IMR-90 (cell line): ENCODE measurements at regions of chr5 and their contacts with region 1.

Region 1: DNA sequence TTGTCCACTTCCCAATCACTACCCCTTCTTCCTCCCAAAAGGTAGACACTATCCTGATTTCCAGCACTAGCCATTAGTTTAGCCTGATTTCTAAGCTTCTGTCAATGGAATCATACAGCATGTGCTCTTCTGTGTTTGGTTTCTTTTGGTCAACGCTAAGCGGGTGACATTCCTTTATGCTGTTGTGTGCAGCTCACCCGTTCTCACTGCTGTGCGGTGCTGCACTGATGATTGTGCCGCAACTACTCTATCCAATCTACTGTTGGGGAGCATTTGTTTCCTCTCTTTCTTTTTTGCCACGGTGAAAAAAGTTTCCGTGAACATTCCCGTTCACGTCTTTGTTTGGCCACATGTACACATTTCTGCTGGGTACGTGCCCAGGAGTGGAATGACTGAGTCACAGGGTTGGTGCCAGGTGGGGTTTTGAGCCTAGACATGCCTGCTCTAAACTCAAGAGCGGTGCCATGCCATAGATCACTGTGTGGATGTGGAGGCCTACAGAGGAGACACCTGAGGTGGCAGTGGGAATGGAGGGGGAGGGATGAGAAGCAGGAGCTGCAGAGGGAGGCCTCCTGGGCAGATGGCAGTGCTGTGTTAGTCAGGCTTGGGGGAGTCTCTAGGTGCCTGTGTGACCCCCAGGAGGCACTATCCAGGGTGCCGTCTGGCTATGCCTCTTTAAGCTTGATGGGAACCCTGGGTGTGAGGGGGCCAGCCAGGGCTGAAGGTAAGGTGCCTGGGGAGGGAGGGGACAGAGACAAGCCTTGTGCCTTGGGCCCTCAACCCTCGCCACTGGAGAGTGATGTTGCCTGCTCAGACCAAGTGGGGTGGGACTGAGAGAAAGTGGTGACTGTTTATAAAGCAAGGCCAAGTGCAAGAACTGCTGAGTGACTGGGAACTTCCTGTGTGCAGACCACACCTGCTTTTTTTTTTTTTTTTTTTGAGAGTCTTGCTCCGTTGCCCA is 11.4 kb upstream of the ANKRD33B start:
- DNase-seq: peak; percentile 37
- ATAC-seq: no peak
- H3K4me3 ChIP-seq: no peak overlapping the region
- H3K27ac ChIP-seq: peak overlapping the region; percentile 71
- H3K4me1 ChIP-seq: peaks cover 39% of the 10 kb centered on the region
- H3K27me3 ChIP-seq: no peaks in the 10 kb centered on the region
- CTCF ChIP-seq: no peak
- POLR2A ChIP-seq: no peak
- RAD21 ChIP-seq: no peak

Region 2: DNA sequence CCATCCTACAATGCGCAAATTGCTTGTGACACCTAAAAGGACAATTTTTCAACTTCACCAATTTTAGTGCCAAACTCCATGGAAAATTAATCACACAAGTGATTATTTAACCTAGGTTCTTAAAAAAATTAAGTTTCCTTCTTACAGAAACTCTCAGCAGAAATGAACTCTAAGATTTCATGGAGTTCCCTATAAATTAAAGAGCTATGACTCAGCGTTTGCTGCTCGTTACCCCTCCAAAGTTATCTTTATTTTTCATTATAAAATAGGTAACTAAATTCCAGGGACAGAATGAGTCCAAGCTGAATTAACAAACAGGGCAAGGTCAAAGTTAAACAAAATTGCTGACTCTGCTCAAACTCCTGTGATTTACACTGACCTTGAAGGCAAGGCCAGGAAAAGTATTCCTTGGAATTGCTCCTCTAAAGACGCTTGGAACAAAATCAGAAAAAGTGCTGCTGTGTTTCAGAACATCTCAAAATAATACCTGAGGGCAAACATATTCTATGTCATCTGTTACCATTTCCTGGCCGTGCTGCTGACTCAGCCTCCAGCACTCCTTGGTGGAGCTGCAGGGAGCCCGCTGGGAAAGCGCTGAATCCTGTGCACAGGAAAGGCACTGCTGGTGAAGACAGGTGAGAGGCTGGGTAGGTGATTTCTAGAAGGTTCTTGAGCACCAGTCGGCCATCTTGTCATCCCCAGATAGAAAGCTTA is 242.2 kb before region 1 on chr5:
- CTCF ChIA-PET with region 1: no interaction called
- POLR2A ChIA-PET with region 1: no interaction called
- dilution Hi-C with region 1: no loop called
- in situ Hi-C with region 1: no loop called
- intact Hi-C with region 1: no loop called
- DNase-seq: peak; percentile 59
- ATAC-seq: no peak
- H3K4me3 ChIP-seq: no peak overlapping the region
- H3K27ac ChIP-seq: 0 out of 2 replicates have a peak overlapping the region, but pooled peaks have one; percentile 9
- H3K4me1 ChIP-seq: peaks cover 8% of the 10 kb centered on the region
- H3K27me3 ChIP-seq: no peaks in the 10 kb centered on the region; the same call in 1 of the 2 replicates
- CTCF ChIP-seq: no peak
- POLR2A ChIP-seq: no peak
- RAD21 ChIP-seq: no peak

Region 3: GRCh38 chr5:10485142-10485795 is 67.2 kb before region 1 on chr5:
- CTCF ChIA-PET with region 1: no interaction called
- POLR2A ChIA-PET with region 1: no interaction called
- dilution Hi-C with region 1: no loop called
- in situ Hi-C with region 1: no loop called
- intact Hi-C with region 1: loop called (anchors 1 kb)
- DNase-seq: peak; percentile 96
- ATAC-seq: peak; percentile 89
- H3K4me3 ChIP-seq: no peak overlapping the region
- H3K27ac ChIP-seq: peak overlapping the region; percentile 80
- H3K4me1 ChIP-seq: peaks cover 19% of the 10 kb centered on the region
- H3K27me3 ChIP-seq: no peaks in the 10 kb centered on the region
- CTCF ChIP-seq: no peak
- POLR2A ChIP-seq: no peak
- RAD21 ChIP-seq: no peak

Region 4: DNA sequence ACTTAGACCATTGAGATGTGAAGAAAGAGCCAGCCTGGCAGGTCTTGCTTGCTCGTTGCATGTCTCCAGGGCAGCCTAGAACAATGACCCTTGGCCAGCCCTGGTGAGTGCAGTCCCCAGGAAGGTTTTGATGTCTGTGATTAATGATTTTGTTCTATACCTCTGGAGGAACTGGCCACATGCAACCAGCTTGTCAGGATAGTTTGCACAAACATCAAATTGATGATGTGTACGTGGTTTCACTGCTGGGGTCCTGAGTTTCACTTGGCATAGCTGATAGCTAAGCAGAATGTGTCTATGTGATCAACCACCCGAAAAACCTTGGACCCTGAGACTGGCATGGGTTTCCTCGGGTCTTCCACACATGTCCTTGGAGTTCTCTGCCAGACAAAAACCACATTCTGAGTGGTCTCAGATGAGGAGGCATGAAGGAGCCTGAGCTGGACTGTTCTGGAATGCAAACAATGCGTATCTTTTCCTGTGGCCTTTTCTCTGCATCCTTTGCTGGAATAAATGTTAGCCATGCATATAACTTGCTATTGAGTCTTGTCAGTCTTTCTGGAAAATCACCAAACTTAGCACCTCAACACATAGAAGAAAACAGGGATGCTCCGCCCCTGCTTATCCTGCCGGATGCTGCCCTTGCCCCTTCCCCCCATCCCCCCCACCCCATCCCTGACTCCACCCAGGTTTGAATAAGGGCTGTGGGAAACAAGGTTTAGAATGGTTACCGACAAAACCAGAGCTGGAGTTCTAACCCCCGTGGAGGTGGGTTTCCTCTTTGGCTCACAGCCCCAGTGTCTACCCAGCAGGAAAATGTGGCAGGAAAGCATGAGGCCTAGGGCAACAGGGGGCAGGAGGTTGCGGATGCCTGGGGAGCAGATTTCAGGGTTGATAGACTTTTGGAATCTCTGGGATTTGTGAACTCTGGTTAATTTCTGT is 38.7 kb before region 1 on chr5:
- CTCF ChIA-PET with region 1: interaction called, 3 read pairs
- POLR2A ChIA-PET with region 1: no interaction called
- dilution Hi-C with region 1: no loop called
- in situ Hi-C with region 1: no loop called
- intact Hi-C with region 1: loop called (anchors 5 kb)
- DNase-seq: peak; percentile 83
- ATAC-seq: peak; percentile 95
- H3K4me3 ChIP-seq: no peak overlapping the region
- H3K27ac ChIP-seq: peak overlapping the region; percentile 74
- H3K4me1 ChIP-seq: peaks cover 10% of the 10 kb centered on the region
- H3K27me3 ChIP-seq: no peaks in the 10 kb centered on the region
- CTCF ChIP-seq: no peak
- POLR2A ChIP-seq: no peak
- RAD21 ChIP-seq: no peak

Region 5: DNA sequence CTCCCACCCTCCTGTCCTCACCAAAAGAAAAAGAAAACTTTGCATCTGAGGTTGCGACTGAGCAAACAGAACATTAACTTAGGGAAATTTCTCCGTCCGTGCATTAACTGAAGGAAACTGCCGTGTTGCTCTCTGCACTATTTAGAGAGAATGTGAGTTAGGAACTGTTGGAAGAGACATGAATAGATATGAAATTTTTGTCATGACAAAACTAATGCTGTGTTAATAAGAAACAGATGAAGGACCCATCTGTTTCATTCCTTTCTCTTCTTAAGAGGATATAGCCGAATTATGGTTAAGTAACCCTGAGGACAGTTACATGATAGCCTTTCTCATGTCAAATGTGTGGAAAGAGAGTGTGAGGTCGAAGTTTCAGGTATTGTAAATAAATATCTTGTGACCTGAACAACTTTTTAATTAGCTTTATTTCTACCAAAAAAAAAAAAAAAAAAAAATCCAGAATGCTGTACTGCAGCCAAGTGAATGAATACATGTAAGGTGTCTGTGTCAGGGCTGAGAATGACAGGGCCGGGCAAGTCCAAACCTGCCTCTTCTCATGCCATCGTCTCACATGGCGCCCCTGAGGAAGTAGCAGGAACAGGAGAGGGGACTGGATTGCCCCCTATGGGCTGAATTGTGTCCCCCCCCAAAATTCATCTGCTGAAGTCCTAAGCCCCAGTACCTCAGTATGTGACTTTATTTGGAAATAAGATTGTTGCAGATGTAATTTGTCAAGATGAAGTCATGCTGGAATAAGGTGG is 24.2 kb before region 1 on chr5:
- CTCF ChIA-PET with region 1: interaction called, 4 read pairs
- POLR2A ChIA-PET with region 1: no interaction called
- dilution Hi-C with region 1: no loop called
- in situ Hi-C with region 1: no loop called
- intact Hi-C with region 1: loop called (anchors 2 kb)
- DNase-seq: peak; percentile 60
- ATAC-seq: peak; percentile 9; the same call in 1 of the 2 replicates
- H3K4me3 ChIP-seq: no peak overlapping the region
- H3K27ac ChIP-seq: peak overlapping the region; percentile 68; the same call in 1 of the 2 replicates
- H3K4me1 ChIP-seq: peaks cover 29% of the 10 kb centered on the region
- H3K27me3 ChIP-seq: no peaks in the 10 kb centered on the region
- CTCF ChIP-seq: no peak
- POLR2A ChIP-seq: no peak
- RAD21 ChIP-seq: no peak

Region 6: GRCh38 chr5:10563945-10564837 is 11.7 kb after region 1 on chr5 and contains the start of gene ANKRD33B:
- CTCF ChIA-PET with region 1: no interaction called
- POLR2A ChIA-PET with region 1: interaction called, 10 read pairs
- dilution Hi-C with region 1: no loop called
- in situ Hi-C with region 1: no loop called
- intact Hi-C with region 1: no loop called
- DNase-seq: peak; percentile 63
- ATAC-seq: peak; percentile 80
- H3K4me3 ChIP-seq: peak within 1 kb of the TSS; percentile 99
- H3K27ac ChIP-seq: peak within 1 kb of the TSS; percentile 86
- H3K4me1 ChIP-seq: peaks cover 28% of the 10 kb centered on the region
- H3K27me3 ChIP-seq: no peaks in the 10 kb centered on the region
- CTCF ChIP-seq: no peak
- POLR2A ChIP-seq: peak; percentile 80
- RAD21 ChIP-seq: no peak
- total RNA-seq, gene ANKRD33B: 2.5 and 2.8 TPM in 2 replicates